ENCODE measurements at regions of chrX and their contacts with region 1.

Region 1: DNA sequence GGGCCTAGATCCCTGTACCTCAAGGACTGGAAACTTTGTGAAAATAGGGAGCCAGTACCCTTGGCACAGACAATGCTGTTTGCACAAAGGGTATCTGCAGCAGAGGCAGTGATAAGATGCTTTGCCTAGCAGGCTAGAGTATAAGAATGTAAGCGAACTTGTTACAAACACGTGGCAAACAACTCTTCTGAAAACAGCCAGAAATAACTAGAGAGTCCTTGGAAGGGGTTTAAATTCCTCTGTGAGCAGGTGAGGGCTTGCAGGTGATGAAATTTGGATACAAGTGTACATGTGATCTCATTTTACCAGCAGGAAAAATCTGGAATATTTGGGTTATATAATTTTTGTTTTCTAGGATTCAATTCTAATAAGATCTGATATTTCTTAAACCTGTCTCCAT is 18.6 kb upstream of the ACSL4 start:
- DNase-seq: no peak
- H3K4me3 ChIP-seq: no peak overlapping the region
- H3K27ac ChIP-seq: no peak overlapping the region
- H3K4me1 ChIP-seq: no peaks in the 10 kb centered on the region
- H3K27me3 ChIP-seq: no peaks in the 10 kb centered on the region
- CTCF ChIP-seq: no peak

Region 2: DNA sequence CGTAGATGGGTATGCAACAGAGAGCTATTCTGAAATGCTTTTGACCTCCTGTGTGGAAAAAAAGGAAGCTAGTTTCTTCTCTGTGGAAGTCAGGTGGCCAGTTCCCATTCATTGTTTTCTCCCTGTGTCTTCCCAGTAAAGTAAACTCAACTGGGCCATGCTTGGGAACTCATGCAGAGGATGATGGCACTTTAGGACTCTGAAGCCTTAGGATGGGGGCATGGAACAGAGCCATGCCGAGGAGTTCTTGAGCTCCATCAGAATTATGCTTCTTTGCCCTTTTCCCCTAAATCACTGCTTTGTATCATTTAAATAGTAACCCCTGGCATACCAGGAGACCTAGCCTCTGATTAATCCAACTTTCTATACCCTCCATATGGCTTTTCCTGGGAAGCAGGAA is 254.5 kb after region 1 on chrX:
- CTCF ChIA-PET with region 1: interaction called, 10 read pairs
- POLR2A ChIA-PET with region 1: no interaction called
- intact Hi-C with region 1: no loop called
- DNase-seq: no peak
- H3K4me3 ChIP-seq: no peak overlapping the region
- H3K27ac ChIP-seq: no peak overlapping the region
- H3K4me1 ChIP-seq: peaks cover 4% of the 10 kb centered on the region
- H3K27me3 ChIP-seq: no peaks in the 10 kb centered on the region
- CTCF ChIP-seq: no peak

Measured in A673 (cell line).